Mucosa of descending colon (tissue), 3 donors: ENCODE measurements at regions of chr4 and their contacts with region 1.

Region 1: GRCh38 chr4:124262211-124263179 is 450.0 kb downstream of the ANKRD50 start:
- DNase-seq: peak in 1 of 3 donors; percentile 77
- ATAC-seq: peak; percentile 67
- H3K4me3 ChIP-seq: no peak overlapping the region
- H3K4me1 ChIP-seq: no peaks in the 10 kb centered on the region
- CTCF ChIP-seq: peak; percentile 39

Region 2: DNA sequence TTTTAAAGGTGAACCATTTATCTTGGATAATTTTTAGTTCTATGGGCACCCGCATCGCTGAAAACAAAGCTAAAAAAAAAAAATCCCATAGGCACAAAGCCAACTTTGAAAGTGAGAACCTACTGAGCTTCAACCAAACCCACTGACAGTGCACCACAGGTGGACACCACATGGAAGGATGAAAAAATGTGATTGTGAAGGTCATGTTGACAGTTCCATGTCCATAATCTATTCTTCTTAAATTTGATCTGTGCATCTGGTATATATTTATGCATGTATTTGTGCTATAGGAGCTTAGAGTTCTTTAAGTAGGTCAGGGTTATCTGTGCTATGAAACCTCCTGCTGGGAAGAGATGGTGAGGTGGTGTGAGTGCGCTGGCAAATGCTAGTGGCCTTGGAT is 491.6 kb before region 1 on chr4:
- intact Hi-C with region 1: loop called in 1 of 2 experiments (anchors 5 kb)
- DNase-seq: no peak
- ATAC-seq: no peak
- H3K4me3 ChIP-seq: no peak overlapping the region
- H3K4me1 ChIP-seq: no peaks in the 10 kb centered on the region
- CTCF ChIP-seq: no peak